Heart right ventricle (tissue), 16 donors: ENCODE measurements at regions of chr1 and their contacts with region 1.

Region 1: DNA sequence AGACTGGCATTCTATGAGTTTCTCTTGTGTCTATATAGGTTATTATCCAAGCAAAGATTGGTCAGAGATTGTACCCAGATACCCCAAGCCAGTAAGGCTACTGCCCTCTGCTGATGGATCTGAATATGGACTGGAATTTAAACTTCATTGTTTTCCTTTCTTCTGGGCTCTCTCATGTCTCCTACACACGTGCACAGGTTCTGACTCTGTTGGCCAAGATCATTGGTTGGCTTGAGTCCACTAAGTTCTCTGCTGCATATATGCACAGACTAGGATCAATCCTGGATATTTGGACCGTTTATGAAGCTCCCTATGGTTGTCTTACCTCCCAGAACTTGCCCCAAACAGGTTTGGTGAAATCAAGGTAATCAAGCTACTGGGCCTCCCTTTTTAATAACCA is 69.7 kb downstream of the CC2D1B start:
- DNase-seq: no peak
- ATAC-seq: peak in 4 of 8 donors; percentile 39 to 57 (median 55)
- H3K4me3 ChIP-seq: no peak overlapping the region
- H3K27ac ChIP-seq: no peak overlapping the region
- H3K4me1 ChIP-seq: no peaks in the 10 kb centered on the region
- H3K27me3 ChIP-seq: no peaks in the 10 kb centered on the region
- CTCF ChIP-seq: peak; percentile 42 to 75 (median 68)

Region 2: GRCh38 chr1:52127181-52128180 is 168.9 kb before region 1 on chr1:
- intact Hi-C with region 1: loop called in 9 of 10 experiments (anchors 2 to 5 kb)
- DNase-seq: peak in 1 of 2 donors; percentile 36
- ATAC-seq: peak in 6 of 8 donors; percentile 11 to 61 (median 37)
- H3K4me3 ChIP-seq: no peak overlapping the region
- H3K27ac ChIP-seq: no peak overlapping the region
- H3K4me1 ChIP-seq: peaks cover 0 to 5% (median 0%) of the 10 kb centered on the region in 9 donors
- H3K27me3 ChIP-seq: peaks cover 0 to 24% (median 0%) of the 10 kb centered on the region in 7 donors
- CTCF ChIP-seq: peak; percentile 35 to 83 (median 74)

Region 3: DNA sequence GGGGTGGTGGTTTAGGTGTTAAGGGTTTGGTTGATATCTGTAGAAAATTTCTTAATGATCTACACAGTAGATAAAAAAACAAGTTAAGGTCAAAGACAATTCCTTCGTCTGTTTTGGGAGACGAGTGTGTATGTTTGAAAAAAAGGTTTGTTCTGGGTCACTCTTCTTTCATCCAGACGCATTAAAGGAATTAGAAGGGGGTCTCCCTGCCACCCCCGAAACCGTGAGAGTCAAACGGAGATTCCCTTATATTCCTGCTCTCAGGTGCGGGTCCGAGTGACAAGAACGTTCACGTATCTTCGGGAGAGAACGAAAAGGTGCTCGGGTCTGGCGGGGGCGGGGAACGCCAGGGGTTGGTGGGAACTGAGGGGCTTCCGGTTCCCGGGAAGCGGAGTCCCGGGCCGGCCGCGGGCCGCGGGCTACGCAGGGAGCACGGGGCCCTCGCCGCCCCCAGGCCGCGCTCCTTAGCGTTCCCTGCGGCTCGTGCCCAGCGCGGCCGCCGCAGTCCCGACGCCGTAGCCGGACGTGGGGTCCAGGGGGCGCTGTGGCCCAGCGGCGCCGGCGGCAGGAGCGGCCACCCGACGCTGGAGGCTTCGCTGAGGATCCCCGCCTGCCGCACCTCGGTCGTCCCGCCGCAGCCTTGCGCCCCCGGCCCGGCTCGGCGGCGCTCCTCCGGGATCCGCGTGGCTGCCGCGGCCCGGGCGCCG is 154.7 kb before region 1 on chr1 and contains the start of gene ZFYVE9:
- intact Hi-C with region 1: loop called (anchors 1 to 10 kb)
- DNase-seq: peak; percentile 71 to 83
- ATAC-seq: peak; percentile 93 to 97 (median 94)
- H3K4me3 ChIP-seq: peak within 1 kb of the TSS; percentile 42 to 94 (median 86)
- H3K27ac ChIP-seq: peak within 1 kb of the TSS; percentile 80 to 98 (median 92)
- H3K4me1 ChIP-seq: peaks cover 3 to 38% (median 19%) of the 10 kb centered on the region in 9 donors
- H3K27me3 ChIP-seq: peaks cover 0 to 27% (median 0%) of the 10 kb centered on the region in 7 donors
- CTCF ChIP-seq: peak; percentile 53 to 90 (median 77)
- total RNA-seq, gene ZFYVE9: 13.5 to 22.2 (median 15.8) TPM